SK-MEL-5 (cell line): ENCODE measurements at regions of chr22 and their contacts with region 1.

Region 1: DNA sequence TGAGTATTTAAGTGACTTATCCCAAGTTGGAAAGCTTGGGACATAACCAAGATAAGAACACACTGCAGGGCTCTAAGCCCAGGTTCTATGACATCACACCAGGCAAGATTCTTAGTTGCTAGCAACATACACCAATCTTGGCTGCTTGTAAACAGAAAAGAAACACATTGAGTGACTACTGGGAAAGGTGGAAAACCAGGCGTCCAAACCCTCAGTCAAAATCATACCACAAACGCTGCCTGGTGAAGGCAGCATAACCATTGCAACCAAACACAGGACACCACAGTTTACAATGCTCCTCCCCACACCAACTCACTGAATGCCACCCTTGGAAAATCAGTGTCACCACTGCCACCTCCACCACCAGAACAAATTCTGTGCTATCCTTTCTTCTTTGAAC is 379.9 kb downstream of the TTC28 start:
- DNase-seq: no peak

Region 2: DNA sequence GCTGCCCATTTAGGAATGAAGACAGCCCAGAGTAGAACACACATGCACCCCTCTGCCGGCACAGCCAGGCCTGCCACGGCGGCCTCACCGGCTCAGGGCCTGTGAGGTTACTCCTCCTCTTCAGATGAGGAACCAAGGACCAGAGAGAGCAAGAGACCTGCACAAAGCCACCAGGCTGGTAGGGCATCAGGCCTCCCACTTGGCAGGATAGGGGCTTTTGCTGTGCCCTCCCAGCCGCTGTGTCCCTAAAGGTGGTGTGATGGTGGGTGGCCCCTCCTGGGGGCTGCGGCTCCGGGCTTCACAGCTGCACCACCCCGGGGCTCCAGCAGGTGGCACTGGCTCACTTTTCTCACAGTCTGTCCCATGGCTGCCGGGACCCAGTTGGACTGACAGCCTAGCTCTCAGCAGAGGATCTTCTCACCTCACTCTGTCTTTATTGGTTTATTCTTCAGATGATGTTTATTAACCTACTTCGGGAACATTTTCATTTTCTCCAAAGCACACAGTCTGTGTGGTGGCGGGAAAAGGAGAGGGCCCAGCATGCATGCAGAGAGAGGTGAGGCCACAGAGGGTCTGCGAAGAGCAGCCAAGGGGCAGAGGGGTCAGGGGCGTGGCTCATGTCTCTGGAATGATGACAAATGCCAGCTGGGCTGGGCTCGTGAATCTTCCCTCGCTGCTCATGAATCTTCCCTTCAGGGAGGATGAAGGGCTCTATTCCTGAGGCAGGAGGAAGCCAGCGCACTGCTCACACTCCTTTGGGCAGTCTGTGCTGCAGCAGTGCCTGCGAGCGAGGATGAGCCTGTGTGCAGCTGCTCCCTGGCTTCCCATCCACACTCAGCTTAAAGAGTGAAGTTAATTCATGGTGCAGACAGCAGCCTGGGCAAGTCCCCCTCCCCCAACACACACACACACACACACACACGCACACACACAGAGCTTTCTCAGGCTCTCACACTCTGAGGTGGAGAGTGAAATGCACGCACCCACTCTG is 279.6 kb before region 1 on chr22:
- in situ Hi-C with region 1: no loop called
- DNase-seq: peak; percentile 69

Region 3: GRCh38 chr22:28151151-28151816 is 148.5 kb before region 1 on chr22:
- in situ Hi-C with region 1: no loop called
- DNase-seq: no peak

Region 4: DNA sequence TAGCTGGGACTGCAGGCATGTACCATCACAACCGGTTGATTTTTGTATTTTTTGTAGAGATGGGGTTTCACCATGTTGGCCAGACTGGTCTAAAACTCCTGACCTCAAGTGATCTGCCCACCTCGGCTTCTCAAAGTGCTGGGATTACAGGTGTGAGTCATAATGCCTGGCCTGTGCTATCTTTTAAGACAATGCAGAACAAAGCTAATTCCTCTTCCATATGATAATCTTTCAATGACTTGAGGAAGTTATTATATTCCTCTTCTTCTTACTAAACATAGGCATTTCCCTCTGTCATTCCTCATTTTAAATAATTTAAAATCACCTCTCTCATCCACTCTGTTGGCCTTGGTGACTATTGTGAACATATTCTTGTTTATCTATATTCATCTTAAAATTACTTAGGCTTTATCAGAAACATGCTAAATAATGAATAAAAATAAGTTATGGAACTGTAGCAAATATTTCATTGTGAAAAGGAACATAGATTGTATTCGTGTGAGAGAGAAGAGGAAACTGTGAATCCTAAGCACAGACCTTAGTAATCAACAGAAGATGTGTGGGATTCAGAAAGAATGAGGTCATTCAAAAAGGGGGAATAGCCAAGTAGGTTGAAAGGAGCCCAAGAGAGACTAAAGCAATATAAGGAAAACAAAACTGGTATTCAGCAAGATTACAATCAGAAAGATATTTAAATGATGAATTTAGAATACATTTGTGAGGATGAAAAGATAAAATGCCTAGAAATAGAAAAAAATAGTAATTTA is 110.5 kb after region 1 on chr22:
- in situ Hi-C with region 1: loop called (anchors 25 kb)
- DNase-seq: no peak

Region 5: DNA sequence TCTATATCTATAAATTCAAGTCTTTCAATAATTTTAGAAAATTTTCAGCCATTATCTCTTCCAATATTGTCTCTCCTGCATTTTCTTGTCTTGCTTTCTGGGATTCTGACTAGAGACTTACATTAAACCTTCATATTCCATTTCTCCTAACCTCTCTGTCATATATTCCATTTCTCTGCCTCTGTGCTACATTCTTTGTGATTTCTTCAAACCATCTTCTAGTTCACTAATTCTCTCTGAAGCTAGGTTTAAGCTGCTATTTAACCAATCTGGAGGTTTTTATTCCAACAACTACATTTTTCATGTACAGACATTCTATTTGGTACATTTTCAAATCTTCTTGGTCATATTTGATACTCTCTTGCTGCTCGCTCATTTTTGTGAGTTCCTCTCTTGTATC is 257.4 kb after region 1 on chr22:
- in situ Hi-C with region 1: no loop called
- DNase-seq: no peak